ENCODE measurements at regions of chr14 and their contacts with region 1.

Region 1: GRCh38 chr14:23286020-23286905 is at the start of gene HOMEZ:
- DNase-seq: peak; percentile 99
- H3K4me3 ChIP-seq: peak within 1 kb of the TSS; percentile 75
- H3K4me3 Mint-ChIP-seq: peak within 1 kb of the TSS; percentile 90
- H3K27ac Mint-ChIP-seq: peak within 1 kb of the TSS; percentile 95
- H3K4me1 ChIP-seq: 0 out of 2 replicates have a peak, but pooled peaks cover 4% of the 10 kb centered on the region
- H3K4me1 Mint-ChIP-seq: peaks cover 6% of the 10 kb centered on the region
- H3K27me3 ChIP-seq: no peaks in the 10 kb centered on the region
- H3K27me3 Mint-ChIP-seq: no peaks in the 10 kb centered on the region
- CTCF ChIP-seq: peak in 1 of 2 experiments; percentile 18
- total RNA-seq, gene HOMEZ: 7.4 and 7.6 TPM in 2 replicates

Region 2: GRCh38 chr14:23237772-23238594 is 48.3 kb before region 1 on chr14 and contains the start of gene RNF212B:
- CTCF ChIA-PET with region 1: no interaction called
- POLR2A ChIA-PET with region 1: no interaction called
- intact Hi-C with region 1: loop called (anchors 2 kb)
- DNase-seq: peak; percentile 93 to 94
- H3K4me3 ChIP-seq: peak within 1 kb of the TSS; percentile 36
- H3K4me3 Mint-ChIP-seq: peak within 1 kb of the TSS; percentile 81
- H3K27ac Mint-ChIP-seq: peak within 1 kb of the TSS; percentile 77
- H3K4me1 ChIP-seq: no peaks in the 10 kb centered on the region
- H3K4me1 Mint-ChIP-seq: no peaks in the 10 kb centered on the region
- H3K27me3 ChIP-seq: no peaks in the 10 kb centered on the region
- H3K27me3 Mint-ChIP-seq: no peaks in the 10 kb centered on the region
- CTCF ChIP-seq: no peak
- total RNA-seq, gene RNF212B: not detected in 2 replicates

Region 3: GRCh38 chr14:23269193-23269592 is 17.1 kb before region 1 on chr14:
- CTCF ChIA-PET with region 1: interaction called, 4 read pairs
- POLR2A ChIA-PET with region 1: no interaction called
- intact Hi-C with region 1: loop called (anchors 1 kb)
- DNase-seq: no peak
- H3K4me3 ChIP-seq: no peak overlapping the region
- H3K4me3 Mint-ChIP-seq: no peak overlapping the region
- H3K27ac Mint-ChIP-seq: no peak overlapping the region
- H3K4me1 ChIP-seq: no peaks in the 10 kb centered on the region
- H3K4me1 Mint-ChIP-seq: no peaks in the 10 kb centered on the region
- H3K27me3 ChIP-seq: no peaks in the 10 kb centered on the region
- H3K27me3 Mint-ChIP-seq: peaks cover 3% of the 10 kb centered on the region
- CTCF ChIP-seq: no peak

Region 4: DNA sequence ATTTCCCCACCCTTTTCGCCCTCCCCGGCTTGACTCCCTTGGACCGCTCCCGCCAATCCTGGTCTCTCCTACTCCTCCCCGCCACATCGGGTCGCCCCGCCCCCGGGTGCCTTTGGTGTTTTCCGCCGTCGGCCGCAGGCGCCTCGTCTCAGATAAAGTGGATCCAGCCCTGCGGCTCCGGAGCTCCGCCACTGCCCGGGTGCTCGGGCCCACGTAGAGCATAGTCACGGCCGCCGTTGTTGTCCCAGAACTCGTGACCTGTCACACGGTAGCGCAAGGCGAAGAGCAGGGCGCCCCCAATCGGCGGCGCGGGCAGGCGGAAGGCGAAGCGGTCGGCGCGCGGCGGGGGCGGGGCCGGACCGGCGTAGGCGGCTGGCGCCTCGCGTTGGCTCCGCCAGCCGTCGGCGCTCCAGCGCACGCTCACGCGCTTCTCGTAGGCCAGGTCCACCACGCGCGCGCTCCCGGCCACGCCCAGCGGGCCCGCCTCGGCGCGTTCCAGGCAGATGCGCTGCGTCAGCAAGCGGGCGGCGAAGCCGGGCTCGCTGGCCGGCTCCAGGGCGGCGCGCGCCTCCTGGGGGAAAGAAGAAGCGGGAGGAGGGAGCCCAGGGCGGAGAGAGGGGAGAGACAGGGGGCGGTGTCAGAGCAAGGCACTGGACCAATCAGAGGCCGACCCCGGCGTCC is 15.2 kb after region 1 on chr14:
- CTCF ChIA-PET with region 1: interaction called, 19 read pairs
- POLR2A ChIA-PET with region 1: interaction called, 12 read pairs
- intact Hi-C with region 1: loop called (anchors 1 kb)
- DNase-seq: peak; percentile 97 to 99
- H3K4me3 ChIP-seq: peak overlapping the region; percentile 71
- H3K4me3 Mint-ChIP-seq: peak overlapping the region; percentile 100
- H3K27ac Mint-ChIP-seq: peak overlapping the region; percentile 90
- H3K4me1 ChIP-seq: peaks cover 18% of the 10 kb centered on the region; the same call in 1 of the 2 replicates
- H3K4me1 Mint-ChIP-seq: peaks cover 7% of the 10 kb centered on the region
- H3K27me3 ChIP-seq: no peaks in the 10 kb centered on the region
- H3K27me3 Mint-ChIP-seq: no peaks in the 10 kb centered on the region
- CTCF ChIP-seq: peak; percentile 66 to 74

Region 5: DNA sequence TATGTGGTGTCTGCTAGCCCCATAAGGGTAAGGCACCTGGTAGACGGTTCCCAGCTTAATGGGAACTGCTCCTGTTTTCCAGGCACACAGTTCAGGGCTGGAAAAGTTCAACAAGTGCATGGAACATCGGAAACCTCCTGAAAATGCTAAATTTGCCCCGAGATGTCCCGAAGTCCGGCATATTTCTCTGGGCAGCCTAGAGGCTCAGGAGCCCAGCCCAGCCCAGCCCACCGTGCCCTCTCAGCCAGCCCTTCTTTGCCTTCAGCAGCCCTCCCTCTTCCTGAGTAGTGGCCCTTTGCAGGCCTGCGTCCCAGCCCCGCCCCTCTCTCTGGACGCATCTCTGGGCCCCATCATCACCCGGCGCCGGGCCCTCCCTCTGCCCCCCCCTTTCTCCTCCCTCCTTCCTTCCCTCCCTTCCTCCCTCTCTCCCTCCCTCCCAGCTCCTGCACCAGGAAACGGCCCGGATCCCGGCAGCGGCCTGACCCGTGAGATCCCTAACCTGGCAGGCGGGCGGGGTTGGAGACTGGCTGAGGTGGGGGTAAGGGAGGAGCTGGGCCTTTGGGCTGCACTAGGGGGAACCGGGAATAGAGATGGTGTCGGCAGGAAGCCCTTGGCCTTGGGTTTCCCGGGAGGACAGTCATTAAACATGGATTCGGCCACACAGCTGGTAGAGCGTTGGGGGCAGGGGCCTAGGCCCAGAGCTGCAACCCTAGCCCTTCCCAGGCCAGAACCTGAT is 20.3 kb after region 1 on chr14 and contains the start of gene BCL2L2:
- CTCF ChIA-PET with region 1: interaction called, 19 read pairs
- POLR2A ChIA-PET with region 1: interaction called, 12 read pairs
- intact Hi-C with region 1: loop called (anchors 1 kb)
- DNase-seq: peak; percentile 91 to 94
- H3K4me3 ChIP-seq: peak within 1 kb of the TSS; percentile 68
- H3K4me3 Mint-ChIP-seq: peak within 1 kb of the TSS; percentile 75
- H3K27ac Mint-ChIP-seq: peak within 1 kb of the TSS; percentile 78
- H3K4me1 ChIP-seq: peaks cover 15% of the 10 kb centered on the region; the same call in 1 of the 2 replicates
- H3K4me1 Mint-ChIP-seq: peaks cover 14% of the 10 kb centered on the region
- H3K27me3 ChIP-seq: no peaks in the 10 kb centered on the region
- H3K27me3 Mint-ChIP-seq: no peaks in the 10 kb centered on the region
- CTCF ChIP-seq: no peak
- total RNA-seq, gene BCL2L2: 19.1 and 20.8 TPM in 2 replicates

Measured in Caco-2 (cell line).